ENCODE measurements at regions of chr15 and their contacts with region 1.

Region 1: GRCh38 chr15:61449186-61449702 is 220.1 kb upstream of the RORA start:
- DNase-seq: no peak
- H3K4me3 ChIP-seq: no peak overlapping the region
- H3K27ac ChIP-seq: no peak overlapping the region
- H3K4me1 ChIP-seq: no peaks in the 10 kb centered on the region
- CTCF ChIP-seq: no peak

Region 2: GRCh38 chr15:61383421-61383820 is 65.8 kb before region 1 on chr15:
- CTCF ChIA-PET with region 1: no interaction called
- POLR2A ChIA-PET with region 1: no interaction called
- intact Hi-C with region 1: no loop called
- DNase-seq: no peak
- H3K4me3 ChIP-seq: no peak overlapping the region
- H3K27ac ChIP-seq: no peak overlapping the region
- H3K4me1 ChIP-seq: no peaks in the 10 kb centered on the region
- CTCF ChIP-seq: no peak

Region 3: DNA sequence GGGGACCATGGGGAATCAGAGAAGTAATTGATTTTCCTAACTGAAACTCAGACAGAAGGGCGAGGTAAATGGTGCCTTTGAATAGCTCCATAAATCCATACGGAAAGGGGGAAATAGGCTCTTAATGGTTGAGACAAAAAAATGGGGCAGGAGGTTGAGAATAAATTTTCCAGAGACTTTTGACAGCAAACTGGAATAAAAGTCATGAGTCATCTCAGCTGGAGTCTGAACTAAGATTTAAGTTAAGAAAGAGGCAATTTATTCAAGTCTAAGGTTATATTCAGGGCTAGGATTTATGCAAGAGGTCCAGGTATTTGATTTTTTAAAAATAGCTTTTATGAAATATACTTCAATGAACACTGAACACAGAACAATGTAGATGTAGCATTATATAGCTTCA is 18.6 kb after region 1 on chr15:
- CTCF ChIA-PET with region 1: no interaction called
- POLR2A ChIA-PET with region 1: interaction called, 11 read pairs
- intact Hi-C with region 1: no loop called
- DNase-seq: no peak
- H3K4me3 ChIP-seq: no peak overlapping the region
- H3K27ac ChIP-seq: no peak overlapping the region
- H3K4me1 ChIP-seq: no peaks in the 10 kb centered on the region
- CTCF ChIP-seq: no peak

Region 4: GRCh38 chr15:62378772-62379498 is 929.7 kb after region 1 on chr15:
- CTCF ChIA-PET with region 1: no interaction called
- POLR2A ChIA-PET with region 1: no interaction called
- intact Hi-C with region 1: no loop called
- DNase-seq: no peak
- H3K4me3 ChIP-seq: no peak overlapping the region
- H3K27ac ChIP-seq: no peak overlapping the region
- H3K4me1 ChIP-seq: no peaks in the 10 kb centered on the region
- CTCF ChIP-seq: no peak

Measured in OCI-LY7 (cell line).